Activated T-helper 1 cell treated with anti-CD3 and anti-CD28 coated beads, Interleukin-12 subunit alpha, Interleukin-12 subunit beta, Interleukin-2, Interleukin-4 antibody, amounts not matched to agents 30 ng/mL and 10 ng/mL and 1 ng/mL, durations not matched to agents 14 hours and 24 hours and 36 hours (primary cell): ENCODE measurements at regions of chr4 and their contacts with region 1.

Region 1: GRCh38 chr4:102430461-102430910 is 70.7 kb upstream of the NFKB1 start:
- DNase-seq: no peak
- H3K4me3 Mint-ChIP-seq: peak overlapping the region; percentile 87
- H3K27ac Mint-ChIP-seq: peak overlapping the region; percentile 82
- H3K4me1 Mint-ChIP-seq: peaks cover 15% of the 10 kb centered on the region
- H3K27me3 Mint-ChIP-seq: peaks cover 5% of the 10 kb centered on the region

Region 2: GRCh38 chr4:102255454-102255853 is 175.0 kb before region 1 on chr4:
- intact Hi-C with region 1: loop called (anchors 1 kb)
- DNase-seq: no peak
- H3K4me3 Mint-ChIP-seq: no peak overlapping the region
- H3K27ac Mint-ChIP-seq: no peak overlapping the region
- H3K4me1 Mint-ChIP-seq: no peaks in the 10 kb centered on the region
- H3K27me3 Mint-ChIP-seq: no peaks in the 10 kb centered on the region

Region 3: DNA sequence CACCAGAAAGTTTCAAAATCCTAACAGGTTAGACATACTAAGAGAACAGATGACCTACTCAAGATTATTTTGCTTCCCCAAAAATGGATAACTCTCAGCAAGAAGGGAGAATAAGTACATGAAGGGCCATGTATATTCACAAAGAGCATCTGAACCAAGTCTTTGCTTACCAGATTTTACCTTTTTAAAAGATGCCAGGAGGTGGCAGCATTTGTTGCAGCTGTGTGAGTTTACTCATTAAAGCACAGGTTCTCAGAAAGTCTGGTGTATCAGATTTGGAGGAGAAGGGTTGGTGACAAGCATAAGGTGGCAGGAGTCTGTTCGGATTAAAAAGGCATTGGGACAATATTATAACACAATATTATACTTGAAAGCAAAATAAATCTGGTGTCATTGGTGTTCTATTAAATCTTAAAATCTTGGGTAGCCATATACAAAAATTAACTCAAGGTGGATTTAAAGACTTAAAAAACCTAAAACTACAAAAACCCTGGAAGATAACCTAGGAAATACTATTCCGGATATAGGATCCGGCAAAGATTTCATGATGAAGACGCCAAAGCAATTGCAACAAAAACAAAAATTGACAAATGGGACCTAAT is 19.4 kb after region 1 on chr4:
- intact Hi-C with region 1: loop called (anchors 1 kb)
- DNase-seq: peak; percentile 52
- H3K4me3 Mint-ChIP-seq: no peak overlapping the region
- H3K27ac Mint-ChIP-seq: no peak overlapping the region
- H3K4me1 Mint-ChIP-seq: peaks cover 36% of the 10 kb centered on the region
- H3K27me3 Mint-ChIP-seq: peaks cover under 1% of the 10 kb centered on the region

Region 4: DNA sequence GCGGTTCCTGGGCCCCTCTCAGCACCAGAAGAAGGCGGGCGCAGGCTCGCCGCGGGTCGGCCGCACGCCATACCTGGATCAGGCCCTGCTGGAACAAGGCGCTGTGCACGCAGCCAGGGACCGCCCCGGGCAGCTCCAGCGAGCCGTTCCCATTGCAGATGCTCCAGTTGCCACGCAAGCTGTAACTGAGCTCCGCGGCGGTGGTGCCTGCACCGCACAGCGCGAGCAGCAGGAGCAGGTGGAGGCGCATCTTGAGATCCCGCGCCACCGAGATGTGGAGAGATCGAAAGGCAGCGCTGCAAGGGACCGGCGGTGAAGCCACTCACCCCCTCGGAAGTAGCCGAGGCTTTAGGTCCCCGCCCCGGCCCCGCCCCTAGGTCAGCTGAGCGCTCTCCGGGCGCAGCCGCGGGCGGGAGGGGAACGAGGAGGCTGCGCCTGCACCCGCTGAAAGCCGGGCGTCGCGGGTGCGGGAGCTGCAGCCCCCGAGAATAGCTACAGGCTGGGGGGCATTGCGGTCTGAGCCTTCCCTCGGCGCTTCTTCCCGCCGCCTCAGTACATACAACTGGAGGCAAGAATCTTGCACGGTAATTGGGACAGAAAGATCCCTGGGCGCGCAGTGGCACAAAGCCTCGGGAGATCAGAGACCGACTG is 330.3 kb after region 1 on chr4 and contains the start of gene MANBA:
- intact Hi-C with region 1: loop called (anchors 2 kb)
- DNase-seq: peak; percentile 77
- H3K4me3 Mint-ChIP-seq: peak within 1 kb of the TSS; percentile 96
- H3K27ac Mint-ChIP-seq: peak within 1 kb of the TSS; percentile 90
- H3K4me1 Mint-ChIP-seq: peaks cover 31% of the 10 kb centered on the region
- H3K27me3 Mint-ChIP-seq: peaks cover 13% of the 10 kb centered on the region
- total RNA-seq, gene MANBA: 7.5 and 8.0 TPM in 2 replicates

Region 5: GRCh38 chr4:103008875-103009729 is 578.6 kb after region 1 on chr4:
- intact Hi-C with region 1: loop called (anchors 1 kb)
- DNase-seq: peak; percentile 32
- H3K4me3 Mint-ChIP-seq: no peak overlapping the region
- H3K27ac Mint-ChIP-seq: no peak overlapping the region
- H3K4me1 Mint-ChIP-seq: no peaks in the 10 kb centered on the region
- H3K27me3 Mint-ChIP-seq: peaks cover 4% of the 10 kb centered on the region

Region 6: GRCh38 chr4:103091601-103092223 is 661.2 kb after region 1 on chr4:
- intact Hi-C with region 1: loop called (anchors 1 kb)
- DNase-seq: peak; percentile 27
- H3K4me3 Mint-ChIP-seq: peak overlapping the region; percentile 71
- H3K27ac Mint-ChIP-seq: peak overlapping the region; percentile 73
- H3K4me1 Mint-ChIP-seq: peaks cover 26% of the 10 kb centered on the region
- H3K27me3 Mint-ChIP-seq: no peaks in the 10 kb centered on the region